Astrocyte of the cerebellum (primary cell): ENCODE measurements at regions of chr18 and their contacts with region 1.

Region 1: GRCh38 chr18:830315-830901 is 18.4 kb upstream of the YES1 start:
- DNase-seq: no peak
- H3K4me3 ChIP-seq: no peak overlapping the region
- CTCF ChIP-seq: no peak

Region 2: DNA sequence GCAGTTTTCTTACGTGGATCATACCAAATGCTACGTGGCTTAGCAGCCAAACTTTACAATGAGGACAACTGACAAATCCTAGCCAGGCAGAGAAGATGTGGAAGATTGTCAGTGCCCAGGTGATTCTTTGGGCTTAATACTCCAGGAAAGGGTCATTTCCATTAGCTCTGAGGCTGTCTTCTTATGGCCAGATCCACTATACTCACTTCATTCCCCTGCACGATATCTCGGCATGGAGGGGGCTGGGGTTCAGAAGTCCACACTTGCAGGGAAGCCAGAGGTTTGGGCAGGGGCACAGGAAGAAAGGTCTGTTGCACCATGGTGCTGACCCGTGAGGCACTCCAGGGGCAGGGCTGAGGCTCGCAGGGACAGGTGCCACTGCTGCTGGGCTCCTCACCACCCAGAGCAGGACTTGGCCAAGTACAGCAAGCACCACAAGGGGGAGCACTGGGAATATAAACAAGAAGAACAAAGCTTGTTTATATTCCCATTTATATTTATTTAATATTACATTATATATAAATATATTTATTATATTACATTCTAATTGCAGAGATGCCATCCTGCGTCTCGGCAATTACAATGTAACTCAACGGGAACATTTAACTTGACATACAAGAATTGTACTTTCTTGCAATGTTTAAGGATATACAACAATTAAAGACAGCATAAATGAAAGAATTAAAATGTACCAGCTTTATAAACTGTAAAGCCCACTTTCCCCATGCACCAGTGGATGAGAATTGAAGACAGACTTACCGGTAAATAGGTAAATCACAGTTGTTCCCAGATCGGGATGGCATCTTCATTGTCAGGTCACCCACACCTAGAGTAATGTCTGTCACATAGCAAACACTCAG is 206.4 kb before region 1 on chr18:
- in situ Hi-C with region 1: loop called (anchors 5 kb)
- DNase-seq: peak; percentile 64
- H3K4me3 ChIP-seq: no peak overlapping the region
- CTCF ChIP-seq: peak; percentile 72